HepG2 (cell line): ENCODE measurements at regions of chr15 and their contacts with region 1.

Region 1: GRCh38 chr15:34914317-34914716 is 55.2 kb downstream of the AQR start:
- DNase-seq: no peak
- ATAC-seq: no peak
- H3K4me3 ChIP-seq: no peak overlapping the region
- H3K27ac ChIP-seq: no peak overlapping the region
- H3K4me1 ChIP-seq: no peaks in the 10 kb centered on the region
- H3K27me3 ChIP-seq: no peaks in the 10 kb centered on the region
- CTCF ChIP-seq: no peak
- EP300 ChIP-seq: no peak
- POLR2A ChIP-seq: no peak
- RAD21 ChIP-seq: no peak

Region 2: DNA sequence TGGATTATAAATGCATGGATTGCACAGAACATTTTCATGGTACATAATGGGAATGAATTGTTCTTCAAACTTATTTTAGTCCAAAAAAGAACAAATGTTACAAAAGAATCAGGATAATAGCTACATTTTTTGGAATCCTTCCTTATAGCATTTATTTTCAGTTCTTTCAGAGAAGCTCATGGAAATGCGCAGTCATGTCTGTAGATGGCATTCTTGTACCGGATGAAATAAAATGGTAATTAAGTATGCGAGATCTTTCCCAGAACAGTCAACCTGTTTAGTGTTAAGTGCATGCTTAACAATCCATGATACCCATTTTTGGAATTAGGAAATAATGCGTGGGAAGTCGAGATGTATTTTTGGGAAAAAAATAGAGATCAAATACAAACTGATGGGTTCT is 292.6 kb before region 1 on chr15:
- CTCF ChIA-PET with region 1: no interaction called
- POLR2A ChIA-PET with region 1: no interaction called
- in situ Hi-C with region 1: loop called (anchors 10 kb)
- intact Hi-C with region 1: no loop called
- DNase-seq: peak; percentile 3
- ATAC-seq: no peak
- H3K4me3 ChIP-seq: no peak overlapping the region
- H3K27ac ChIP-seq: no peak overlapping the region
- H3K4me1 ChIP-seq: no peaks in the 10 kb centered on the region
- H3K27me3 ChIP-seq: no peaks in the 10 kb centered on the region
- CTCF ChIP-seq: no peak; the same call in 1 of the 2 replicates
- EP300 ChIP-seq: no peak
- POLR2A ChIP-seq: no peak
- RAD21 ChIP-seq: no peak

Region 3: GRCh38 chr15:34708422-34708821 is 205.9 kb before region 1 on chr15:
- CTCF ChIA-PET with region 1: interaction called, 15 read pairs
- POLR2A ChIA-PET with region 1: no interaction called
- in situ Hi-C with region 1: no loop called
- intact Hi-C with region 1: no loop called
- DNase-seq: peak; percentile 28
- ATAC-seq: peak; percentile 87
- H3K4me3 ChIP-seq: no peak overlapping the region
- H3K27ac ChIP-seq: no peak overlapping the region
- H3K4me1 ChIP-seq: no peaks in the 10 kb centered on the region
- H3K27me3 ChIP-seq: peaks cover 0 to 7% of the 10 kb centered on the region in 2 experiments; a peak in 1 of 5 replicates
- CTCF ChIP-seq: peak; percentile 77
- EP300 ChIP-seq: no peak
- POLR2A ChIP-seq: no peak
- RAD21 ChIP-seq: 0 out of 2 replicates have a peak, but pooled peaks have one; percentile 13